ENCODE measurements at regions of chr19 and their contacts with region 1.

Region 1: GRCh38 chr19:37466798-37467607 is at the start of gene ZNF569:
- DNase-seq: peak; percentile 94
- H3K4me3 ChIP-seq: peak within 1 kb of the TSS; percentile 78
- H3K27ac ChIP-seq: peak within 1 kb of the TSS; percentile 81
- H3K4me1 ChIP-seq: peaks cover 16% of the 10 kb centered on the region
- CTCF ChIP-seq: no peak
- total RNA-seq, gene ZNF569: 10.5 and 11.8 TPM in 2 replicates

Region 2: GRCh38 chr19:36214386-36215275 is 1252.4 kb before region 1 on chr19 and contains the starts of genes ZNF146 and ZNF565:
- CTCF ChIA-PET with region 1: no interaction called
- POLR2A ChIA-PET with region 1: no interaction called
- intact Hi-C with region 1: loop called (anchors 10 kb)
- DNase-seq: peak; percentile 100
- H3K4me3 ChIP-seq: peak within 1 kb of the TSS; percentile 76
- H3K27ac ChIP-seq: peak within 1 kb of the TSS; percentile 71
- H3K4me1 ChIP-seq: peaks cover 21% of the 10 kb centered on the region
- CTCF ChIP-seq: no peak
- total RNA-seq, gene ZNF146: 67.4 and 69.4 TPM in 2 replicates
- total RNA-seq, gene ZNF565: 2.1 and 2.8 TPM in 2 replicates

Region 3: DNA sequence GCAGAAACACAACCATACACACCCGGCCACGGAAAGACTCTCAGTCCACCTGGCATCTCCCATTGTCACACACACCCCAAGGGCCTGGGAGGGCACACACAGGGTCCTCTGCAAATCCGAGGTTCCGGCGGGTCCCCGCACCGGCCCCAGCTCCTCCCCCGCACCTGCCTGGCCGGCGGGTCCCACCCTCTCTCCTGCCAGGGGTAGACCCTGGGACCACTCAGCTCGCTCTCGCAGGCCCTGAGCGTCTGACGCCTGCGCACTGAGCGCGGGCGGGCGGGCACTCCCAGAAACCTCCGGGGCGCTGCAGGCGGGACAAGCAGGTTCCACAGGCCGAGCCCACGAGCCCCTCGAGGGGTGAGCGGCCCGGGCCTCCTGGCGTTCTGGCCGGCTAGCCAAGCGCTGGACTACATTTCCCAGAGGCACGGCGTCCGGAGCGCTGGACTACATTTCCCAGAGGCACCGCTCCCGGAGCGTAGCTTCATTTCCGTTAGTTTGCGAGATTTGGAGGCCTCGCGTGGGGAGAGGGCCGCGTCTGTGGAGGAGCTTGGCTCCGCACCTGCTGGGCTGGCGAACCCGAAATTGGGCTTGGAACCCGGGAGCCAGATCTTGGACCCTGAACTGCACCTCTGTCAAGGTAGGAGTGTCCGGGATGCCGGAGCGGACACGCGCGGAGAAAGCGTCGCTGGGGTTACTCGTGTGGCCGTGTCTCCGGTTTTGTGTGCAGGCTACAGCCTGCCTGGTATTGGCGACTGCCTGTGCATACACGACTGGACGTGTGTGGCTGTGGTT is 388.9 kb before region 1 on chr19 and contains the start of gene ZNF420:
- CTCF ChIA-PET with region 1: no interaction called
- POLR2A ChIA-PET with region 1: no interaction called
- intact Hi-C with region 1: loop called (anchors 5 kb)
- DNase-seq: peak; percentile 98
- H3K4me3 ChIP-seq: peak within 1 kb of the TSS; percentile 88
- H3K27ac ChIP-seq: peak within 1 kb of the TSS; percentile 46
- H3K4me1 ChIP-seq: peaks cover 13% of the 10 kb centered on the region
- CTCF ChIP-seq: no peak
- total RNA-seq, gene ZNF420: 8.8 and 14.0 TPM in 2 replicates

Region 4: DNA sequence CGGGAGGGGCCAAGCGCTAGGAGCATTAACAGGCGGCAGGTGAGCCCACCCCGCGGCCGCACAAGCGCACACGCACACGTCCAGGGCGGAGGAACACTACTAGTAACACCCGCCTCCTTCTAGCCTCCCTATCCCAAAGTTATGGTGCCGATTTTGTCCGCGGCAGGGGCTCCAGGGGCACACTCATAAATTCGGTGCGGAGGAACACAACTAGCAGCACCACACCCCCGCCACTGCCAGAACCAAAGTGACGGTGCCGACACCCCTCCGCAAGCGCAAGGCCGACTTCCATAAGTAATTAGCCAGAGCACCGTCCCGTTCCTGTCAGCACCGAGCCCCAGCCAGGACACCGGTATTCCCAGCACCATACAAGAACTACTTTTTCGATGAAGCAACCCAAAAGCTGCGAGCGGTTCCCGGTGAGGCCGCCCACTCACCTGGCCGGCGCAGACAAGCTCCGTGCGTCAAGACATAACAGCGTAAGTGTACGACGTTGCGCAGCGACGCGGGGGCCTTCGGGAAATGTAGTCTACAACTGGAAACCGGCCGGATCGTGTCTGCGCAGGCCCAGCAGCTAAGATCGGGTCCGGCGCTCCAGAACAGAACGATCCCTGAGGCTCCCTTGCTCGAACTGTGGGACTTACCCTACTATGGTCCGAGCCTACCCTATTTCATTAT is 127.4 kb after region 1 on chr19 and contains the starts of genes ZNF540 and ZNF571:
- CTCF ChIA-PET with region 1: no interaction called
- POLR2A ChIA-PET with region 1: no interaction called
- intact Hi-C with region 1: loop called (anchors 5 kb)
- DNase-seq: peak; percentile 85
- H3K4me3 ChIP-seq: peak within 1 kb of the TSS; percentile 75
- H3K27ac ChIP-seq: peak within 1 kb of the TSS; percentile 15
- H3K4me1 ChIP-seq: peaks cover 3% of the 10 kb centered on the region
- CTCF ChIP-seq: no peak
- total RNA-seq, gene ZNF540: 0.44 and 0.59 TPM in 2 replicates
- total RNA-seq, gene ZNF571: 1.3 and 8.0 TPM in 2 replicates

Region 5: GRCh38 chr19:37779127-37780005 is 312.4 kb after region 1 on chr19 and contains the start of gene ZNF573:
- CTCF ChIA-PET with region 1: no interaction called
- POLR2A ChIA-PET with region 1: no interaction called
- intact Hi-C with region 1: loop called (anchors 5 kb)
- DNase-seq: peak; percentile 91
- H3K4me3 ChIP-seq: peak within 1 kb of the TSS; percentile 94
- H3K27ac ChIP-seq: peak within 1 kb of the TSS; percentile 44
- H3K4me1 ChIP-seq: peaks cover 10% of the 10 kb centered on the region
- CTCF ChIP-seq: peak; percentile 45
- total RNA-seq, gene ZNF573: 7.6 and 10.6 TPM in 2 replicates

Measured in OCI-LY7 (cell line).